A549 (cell line): ENCODE measurements at regions of chr10 and their contacts with region 1.

Region 1: GRCh38 chr10:104300736-104301292 is 31.8 kb downstream of the GSTO2 start:
- DNase-seq: peak; percentile 27 to 59
- ATAC-seq: peak; percentile 63
- H3K4me3 ChIP-seq: no peak overlapping the region
- H3K27ac ChIP-seq: peak overlapping the region in 1 of 2 experiments; percentile 45; a peak in 2 of 6 replicates
- H3K4me1 ChIP-seq: peaks cover 10% of the 10 kb centered on the region; the same call in 1 of the 3 replicates
- CTCF ChIP-seq: no peak
- EP300 ChIP-seq: no peak
- POLR2A ChIP-seq: no peak
- RAD21 ChIP-seq: peak in 1 of 2 experiments; percentile 18; a peak in 1 of 5 replicates

Region 2: GRCh38 chr10:104317195-104317767 is 16.5 kb after region 1 on chr10:
- CTCF ChIA-PET with region 1: interaction called, 66 read pairs
- POLR2A ChIA-PET with region 1: no interaction called
- DNase-seq: no peak
- ATAC-seq: peak in 1 of 2 experiments; percentile 9; a peak in 1 of 6 replicates
- H3K4me3 ChIP-seq: no peak overlapping the region
- H3K27ac ChIP-seq: no peak overlapping the region
- H3K4me1 ChIP-seq: peaks cover 28% of the 10 kb centered on the region
- CTCF ChIP-seq: no peak
- EP300 ChIP-seq: no peak
- POLR2A ChIP-seq: no peak
- RAD21 ChIP-seq: no peak

Region 3: GRCh38 chr10:104337974-104338735 is 37.3 kb after region 1 on chr10 and contains the start of gene ITPRIP:
- CTCF ChIA-PET with region 1: interaction called, 44 read pairs
- POLR2A ChIA-PET with region 1: interaction called, 14 read pairs
- DNase-seq: peak; percentile 78 to 81
- ATAC-seq: peak; percentile 84 to 87
- H3K4me3 ChIP-seq: peak within 1 kb of the TSS; percentile 67
- H3K27ac ChIP-seq: peak within 1 kb of the TSS; percentile 85 to 93
- H3K4me1 ChIP-seq: peaks cover 40% of the 10 kb centered on the region
- CTCF ChIP-seq: no peak; the same call in 2 of the 3 replicates
- EP300 ChIP-seq: no peak
- POLR2A ChIP-seq: peak; percentile 58
- RAD21 ChIP-seq: no peak
- polyA plus RNA-seq, gene ITPRIP: 14.8 and 17.4 TPM in 2 replicates